Right cardiac atrium (tissue), 5 donors: ENCODE measurements at regions of chrX and their contacts with region 1.

Region 1: DNA sequence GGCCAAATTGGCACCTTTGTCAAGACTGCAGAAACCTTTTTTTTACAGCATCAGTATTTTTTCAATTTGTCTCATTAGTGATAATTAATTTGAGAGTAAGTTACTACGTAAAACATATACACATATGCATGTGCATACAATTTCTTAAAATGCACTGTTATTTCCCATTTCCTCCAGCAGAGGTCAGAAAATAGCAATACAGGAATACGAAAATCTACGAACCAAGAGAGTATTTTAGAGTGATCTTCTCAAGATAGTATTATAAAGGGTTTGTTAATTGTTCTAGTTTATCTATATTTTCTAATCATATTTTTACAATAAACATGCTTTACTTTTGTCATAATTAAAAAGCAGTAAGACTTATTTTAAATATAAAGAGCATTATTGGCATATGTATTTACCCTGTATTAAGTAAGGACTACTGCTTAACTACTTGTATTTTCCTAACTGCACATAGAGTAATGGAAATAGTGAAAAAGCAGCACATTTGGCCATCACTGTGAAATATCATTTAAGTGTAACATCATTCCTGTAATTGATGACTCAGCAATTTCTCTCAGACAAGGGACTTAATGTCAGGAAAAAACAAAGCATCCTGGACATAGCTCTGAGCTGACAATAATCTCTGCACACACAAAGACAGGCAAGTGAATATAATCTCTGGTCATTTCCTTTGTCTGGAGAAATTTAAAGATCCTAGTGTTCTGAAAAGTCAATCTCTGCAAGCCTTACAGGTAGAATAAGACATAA is 45.6 kb downstream of the MAOB start:
- DNase-seq: no peak
- ATAC-seq: no peak
- H3K4me3 ChIP-seq: no peak overlapping the region
- H3K27ac ChIP-seq: no peak overlapping the region
- H3K4me1 ChIP-seq: peaks cover 1% of the 10 kb centered on the region
- H3K27me3 ChIP-seq: no peaks in the 10 kb centered on the region

Region 2: DNA sequence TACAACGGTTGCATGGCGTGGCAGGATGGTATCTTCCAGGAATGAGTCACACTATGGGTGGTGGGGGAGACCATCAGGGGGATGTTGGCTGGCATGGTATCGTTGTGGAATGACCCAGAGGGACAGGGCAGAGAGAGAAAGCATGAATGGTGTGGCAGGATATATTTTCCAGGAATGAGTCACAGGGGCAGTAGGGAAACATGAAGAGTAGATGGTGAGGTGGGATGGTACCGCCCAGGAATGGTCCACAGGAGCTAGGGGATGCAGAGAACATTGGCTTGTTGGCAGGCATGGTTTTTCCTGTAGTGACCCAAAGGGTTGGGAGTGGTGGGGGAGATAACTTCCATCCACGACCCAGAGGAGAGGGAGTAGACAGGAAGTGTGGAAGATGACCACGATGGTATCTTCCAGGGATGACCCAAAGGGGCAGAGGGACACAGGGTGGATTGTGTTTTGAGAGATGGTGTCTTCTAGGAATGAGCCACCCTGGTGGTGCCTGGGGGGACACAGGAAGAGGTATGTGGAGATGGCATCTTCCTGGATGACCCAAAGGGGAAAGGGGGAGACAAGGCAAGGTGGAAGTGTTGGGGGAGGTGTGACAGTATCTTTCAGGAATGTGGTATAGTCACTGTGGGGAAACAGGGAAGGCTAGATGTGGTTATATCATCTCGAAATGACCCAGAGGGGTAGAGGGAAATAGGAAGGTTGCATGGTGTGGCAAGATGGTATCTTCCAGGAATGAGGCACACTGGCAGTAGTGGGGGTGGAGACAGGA is 117.9 kb before region 1 on chrX:
- intact Hi-C with region 1: no loop called
- DNase-seq: no peak
- ATAC-seq: no peak
- H3K4me3 ChIP-seq: no peak overlapping the region
- H3K27ac ChIP-seq: no peak overlapping the region
- H3K4me1 ChIP-seq: no peaks in the 10 kb centered on the region
- H3K27me3 ChIP-seq: no peaks in the 10 kb centered on the region

Region 3: GRCh38 chrX:43939187-43939926 is 102.7 kb after region 1 on chrX:
- intact Hi-C with region 1: loop called (anchors 5 to 10 kb)
- DNase-seq: no peak
- ATAC-seq: peak; percentile 64 to 70
- H3K4me3 ChIP-seq: no peak overlapping the region
- H3K27ac ChIP-seq: no peak overlapping the region
- H3K4me1 ChIP-seq: no peaks in the 10 kb centered on the region
- H3K27me3 ChIP-seq: no peaks in the 10 kb centered on the region

Region 4: GRCh38 chrX:43949669-43950068 is 113.1 kb after region 1 on chrX:
- intact Hi-C with region 1: loop called in 1 of 4 experiments (anchors 10 kb)
- DNase-seq: peak; percentile 14 to 59 (median 58)
- ATAC-seq: peak in 1 of 2 donors; percentile 41
- H3K4me3 ChIP-seq: no peak overlapping the region
- H3K27ac ChIP-seq: no peak overlapping the region
- H3K4me1 ChIP-seq: no peaks in the 10 kb centered on the region
- H3K27me3 ChIP-seq: no peaks in the 10 kb centered on the region

Region 5: DNA sequence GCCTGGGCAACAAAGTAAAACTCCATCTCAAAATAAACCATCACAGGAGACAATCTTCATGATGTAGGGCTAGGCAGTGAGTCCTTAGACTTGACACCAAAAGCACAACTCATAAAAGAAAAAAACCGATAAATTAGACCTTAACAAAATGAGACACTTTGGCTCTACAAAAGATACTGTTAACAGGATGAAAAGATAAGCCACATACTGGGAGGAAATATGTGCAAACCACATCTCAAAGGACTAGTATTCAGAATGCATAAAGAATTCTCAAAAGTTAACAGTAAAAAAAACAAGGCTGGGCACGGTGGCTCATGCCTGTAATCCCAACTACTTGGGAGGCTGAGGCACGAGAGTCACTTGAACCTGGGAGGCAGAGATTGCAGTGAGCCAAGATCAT is 493.6 kb after region 1 on chrX:
- intact Hi-C with region 1: no loop called
- DNase-seq: no peak
- ATAC-seq: no peak
- H3K4me3 ChIP-seq: no peak overlapping the region
- H3K27ac ChIP-seq: no peak overlapping the region
- H3K4me1 ChIP-seq: no peaks in the 10 kb centered on the region
- H3K27me3 ChIP-seq: no peaks in the 10 kb centered on the region